B cell (primary cell): ENCODE measurements at regions of chr12 and their contacts with region 1.

Region 1: GRCh38 chr12:25151476-25151875 is 43.5 kb downstream of the DNAI7 start:
- DNase-seq: no peak
- ATAC-seq: no peak
- H3K4me3 ChIP-seq: no peak overlapping the region
- H3K4me3 Mint-ChIP-seq: no peak overlapping the region
- H3K27ac ChIP-seq: no peak overlapping the region
- H3K27ac Mint-ChIP-seq: no peak overlapping the region
- H3K4me1 ChIP-seq: peaks cover 18 to 21% of the 10 kb centered on the region in 2 donors
- H3K4me1 Mint-ChIP-seq: peaks cover 18% of the 10 kb centered on the region
- H3K27me3 ChIP-seq: no peaks in the 10 kb centered on the region
- H3K27me3 Mint-ChIP-seq: no peaks in the 10 kb centered on the region
- CTCF ChIP-seq: no peak

Region 2: GRCh38 chr12:24948757-24949722 is 202.4 kb before region 1 on chr12 and contains the start of gene BCAT1:
- CTCF ChIA-PET with region 1: no interaction called
- POLR2A ChIA-PET with region 1: no interaction called
- intact Hi-C with region 1: no loop called
- DNase-seq: peak; percentile 72
- ATAC-seq: peak; percentile 69
- H3K4me3 ChIP-seq: peak within 1 kb of the TSS; percentile 52 to 78 (median 70)
- H3K4me3 Mint-ChIP-seq: peak within 1 kb of the TSS; percentile 97
- H3K27ac ChIP-seq: peak within 1 kb of the TSS in 1 of 2 donors; percentile 45
- H3K27ac Mint-ChIP-seq: peak within 1 kb of the TSS; percentile 78
- H3K4me1 ChIP-seq: peaks cover 21 to 24% of the 10 kb centered on the region in 2 donors
- H3K4me1 Mint-ChIP-seq: peaks cover 47% of the 10 kb centered on the region
- H3K27me3 ChIP-seq: peaks cover 0 to 16% (median 10%) of the 10 kb centered on the region in 4 experiments
- H3K27me3 Mint-ChIP-seq: peaks cover 13% of the 10 kb centered on the region
- CTCF ChIP-seq: no peak
- total RNA-seq, gene BCAT1: 4.9 and 9.6 TPM in 2 replicates

Region 3: DNA sequence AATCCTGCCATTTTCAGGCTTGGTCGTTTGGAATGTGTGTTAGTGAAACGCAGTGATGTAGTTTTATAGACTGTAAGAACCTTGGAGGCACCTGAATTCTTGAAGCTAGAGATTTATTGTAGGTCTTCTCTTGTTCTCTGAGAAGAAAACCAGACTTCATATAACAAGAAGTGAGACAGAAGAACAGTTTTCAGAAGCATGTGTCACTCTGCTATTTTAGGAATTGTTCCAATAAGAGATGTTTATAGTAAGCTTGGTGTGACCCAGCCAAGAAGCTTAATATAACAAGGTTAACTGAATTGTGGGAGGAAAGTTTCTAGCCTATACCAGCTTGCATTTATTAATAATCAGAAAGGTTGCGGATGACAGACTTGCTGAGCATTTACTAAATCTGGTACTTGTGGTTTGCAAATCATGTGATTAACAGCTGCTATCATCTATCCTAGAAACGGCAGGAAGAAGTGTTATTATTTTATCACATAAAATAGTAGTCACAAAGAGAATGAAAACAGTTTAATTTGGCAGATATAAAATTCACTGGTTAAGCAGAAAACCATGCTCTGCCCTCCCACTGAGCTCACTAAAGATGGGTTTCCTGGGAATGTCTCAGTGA is 153.4 kb before region 1 on chr12:
- CTCF ChIA-PET with region 1: interaction called, 55 read pairs
- POLR2A ChIA-PET with region 1: no interaction called
- intact Hi-C with region 1: no loop called
- DNase-seq: peak; percentile 77
- ATAC-seq: peak; percentile 79
- H3K4me3 ChIP-seq: peak overlapping the region in 2 of 5 experiments; percentile 1 to 59
- H3K4me3 Mint-ChIP-seq: peak overlapping the region; percentile 64
- H3K27ac ChIP-seq: peak overlapping the region; percentile 79 to 84
- H3K27ac Mint-ChIP-seq: peak overlapping the region; percentile 85
- H3K4me1 ChIP-seq: peaks cover 74 to 76% of the 10 kb centered on the region in 2 donors
- H3K4me1 Mint-ChIP-seq: peaks cover 81% of the 10 kb centered on the region
- H3K27me3 ChIP-seq: no peaks in the 10 kb centered on the region
- H3K27me3 Mint-ChIP-seq: no peaks in the 10 kb centered on the region
- CTCF ChIP-seq: no peak

Region 4: DNA sequence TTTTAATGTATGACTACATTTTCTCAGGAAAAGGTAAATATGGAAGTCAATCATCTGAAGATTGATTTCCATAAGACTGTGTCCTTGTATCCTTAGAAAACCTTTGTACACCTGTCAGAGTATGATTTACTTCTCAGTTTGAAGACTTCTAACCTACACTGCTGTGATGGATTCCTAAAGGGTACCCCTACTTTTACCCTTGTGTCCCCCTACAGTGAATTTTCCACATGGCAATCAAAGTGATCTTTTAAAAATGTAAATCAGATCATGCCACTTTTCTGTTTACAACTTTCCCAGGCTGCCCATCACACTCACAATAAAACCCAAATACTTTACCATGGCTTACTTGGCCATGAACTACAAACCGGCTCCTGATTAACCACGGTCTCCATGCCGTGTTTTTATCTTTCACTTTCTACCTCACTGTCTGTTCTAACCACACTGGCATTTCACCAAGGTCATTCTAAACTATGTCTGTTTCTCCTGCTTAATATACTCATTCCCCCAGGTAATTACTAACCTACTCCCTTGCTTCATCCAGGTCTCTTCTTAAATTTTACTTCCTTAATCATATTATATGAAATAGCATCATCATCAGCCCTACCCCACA is 35.4 kb after region 1 on chr12:
- CTCF ChIA-PET with region 1: interaction called, 6 read pairs
- POLR2A ChIA-PET with region 1: no interaction called
- intact Hi-C with region 1: loop called (anchors 1 kb)
- DNase-seq: peak; percentile 31
- ATAC-seq: peak; percentile 61
- H3K4me3 ChIP-seq: peak overlapping the region in 2 of 5 experiments; percentile 45 to 51
- H3K4me3 Mint-ChIP-seq: peak overlapping the region; percentile 77
- H3K27ac ChIP-seq: no peak overlapping the region
- H3K27ac Mint-ChIP-seq: peak overlapping the region; percentile 32
- H3K4me1 ChIP-seq: peaks cover 0 to 3% of the 10 kb centered on the region in 2 donors
- H3K4me1 Mint-ChIP-seq: peaks cover 8% of the 10 kb centered on the region
- H3K27me3 ChIP-seq: no peaks in the 10 kb centered on the region
- H3K27me3 Mint-ChIP-seq: no peaks in the 10 kb centered on the region
- CTCF ChIP-seq: no peak

Region 5: DNA sequence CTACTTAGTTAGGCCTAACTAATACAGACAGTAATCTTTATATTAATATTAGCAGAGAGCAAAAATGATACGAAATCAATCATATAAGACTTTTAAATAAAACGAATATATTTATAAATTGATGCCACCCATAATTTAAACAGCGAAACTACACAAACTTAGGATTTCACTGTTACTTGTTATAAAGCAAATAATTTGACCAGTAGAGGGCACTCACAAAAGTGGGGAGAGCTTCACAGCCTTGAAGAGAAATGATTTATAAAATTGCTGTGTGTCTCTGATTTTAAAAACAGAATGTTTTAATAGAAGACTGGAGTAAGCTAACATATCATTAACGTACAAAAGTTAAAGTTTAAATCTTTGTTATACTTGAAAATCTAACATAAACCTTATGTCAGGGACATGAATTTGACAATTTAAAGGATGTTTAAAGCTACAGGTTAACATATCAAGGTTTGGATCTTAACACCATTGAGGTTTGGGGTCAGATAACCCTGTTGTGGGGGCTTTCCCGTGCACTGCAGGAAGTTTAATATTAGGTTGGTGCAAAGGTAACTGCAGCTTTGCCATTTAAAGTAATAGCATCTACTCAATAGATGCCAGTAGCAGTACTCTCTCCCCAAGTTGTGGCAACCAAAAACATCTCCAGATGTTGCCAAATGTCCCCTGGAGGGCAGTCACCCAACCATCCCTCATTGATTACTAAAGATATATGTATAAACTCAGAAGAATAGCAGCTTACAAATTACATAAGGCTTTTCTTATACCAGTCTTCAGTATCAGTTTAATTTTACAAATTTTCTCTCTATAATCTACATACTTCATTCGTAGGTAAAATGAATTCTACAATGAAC is 89.9 kb after region 1 on chr12:
- CTCF ChIA-PET with region 1: interaction called, 19 read pairs
- POLR2A ChIA-PET with region 1: no interaction called
- intact Hi-C with region 1: no loop called
- DNase-seq: peak; percentile 73
- ATAC-seq: peak; percentile 51
- H3K4me3 ChIP-seq: no peak overlapping the region
- H3K4me3 Mint-ChIP-seq: no peak overlapping the region
- H3K27ac ChIP-seq: peak overlapping the region in 1 of 2 donors; percentile 52
- H3K27ac Mint-ChIP-seq: peak overlapping the region; percentile 26
- H3K4me1 ChIP-seq: no peaks in the 10 kb centered on the region
- H3K4me1 Mint-ChIP-seq: peaks cover 9% of the 10 kb centered on the region
- H3K27me3 ChIP-seq: no peaks in the 10 kb centered on the region
- H3K27me3 Mint-ChIP-seq: no peaks in the 10 kb centered on the region
- CTCF ChIP-seq: peak; percentile 89

Region 6: DNA sequence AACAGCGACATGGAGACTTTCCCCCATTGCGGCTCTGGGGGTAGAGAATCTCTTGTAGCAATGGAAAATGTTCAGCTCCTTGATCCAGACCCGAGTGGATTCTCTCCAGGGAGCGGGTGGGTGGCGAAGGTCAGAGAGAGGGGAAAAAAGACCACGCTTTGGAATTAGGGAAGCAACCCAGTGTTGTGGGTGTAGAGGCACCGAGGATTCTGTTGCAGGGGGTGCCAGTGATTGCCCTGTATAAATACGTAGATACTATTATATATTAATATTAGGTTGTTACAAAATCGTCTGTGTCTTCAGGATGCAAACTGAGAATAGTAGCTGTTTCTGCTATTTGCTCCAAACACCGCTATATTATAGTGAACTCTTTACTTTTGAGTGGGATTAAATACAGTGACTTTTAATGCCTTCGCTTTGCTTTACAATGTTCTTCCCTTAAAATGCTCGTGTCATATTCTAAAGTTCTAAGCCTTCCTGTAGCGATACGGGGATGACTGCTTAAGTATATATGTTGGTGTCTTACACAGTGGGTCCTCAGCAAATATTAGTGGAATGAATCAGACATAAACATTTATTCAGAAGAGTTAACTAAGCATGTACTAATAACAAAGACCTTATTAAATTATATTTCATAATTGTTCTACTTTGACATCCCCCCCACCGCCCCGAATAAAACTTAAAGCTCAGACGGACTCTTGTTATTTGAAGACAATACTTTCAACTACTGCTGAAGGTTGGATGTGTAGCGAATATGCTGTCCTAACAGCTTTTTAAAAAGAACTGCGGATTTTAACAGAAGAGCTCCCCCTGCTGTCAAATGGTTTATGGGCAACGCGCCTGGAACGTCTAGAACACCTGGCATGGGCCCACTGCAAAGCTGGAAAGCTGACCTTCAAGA is 235.6 kb after region 1 on chr12:
- CTCF ChIA-PET with region 1: no interaction called
- POLR2A ChIA-PET with region 1: no interaction called
- intact Hi-C with region 1: loop called (anchors 1 kb)
- DNase-seq: peak; percentile 90
- ATAC-seq: peak; percentile 14
- H3K4me3 ChIP-seq: peak overlapping the region; percentile 68 to 97 (median 90)
- H3K4me3 Mint-ChIP-seq: peak overlapping the region; percentile 96
- H3K27ac ChIP-seq: peak overlapping the region; percentile 100
- H3K27ac Mint-ChIP-seq: peak overlapping the region; percentile 100
- H3K4me1 ChIP-seq: peaks cover 6 to 30% of the 10 kb centered on the region in 2 donors
- H3K4me1 Mint-ChIP-seq: peaks cover 41% of the 10 kb centered on the region
- H3K27me3 ChIP-seq: no peaks in the 10 kb centered on the region
- H3K27me3 Mint-ChIP-seq: no peaks in the 10 kb centered on the region
- CTCF ChIP-seq: peak; percentile 93

Region 7: DNA sequence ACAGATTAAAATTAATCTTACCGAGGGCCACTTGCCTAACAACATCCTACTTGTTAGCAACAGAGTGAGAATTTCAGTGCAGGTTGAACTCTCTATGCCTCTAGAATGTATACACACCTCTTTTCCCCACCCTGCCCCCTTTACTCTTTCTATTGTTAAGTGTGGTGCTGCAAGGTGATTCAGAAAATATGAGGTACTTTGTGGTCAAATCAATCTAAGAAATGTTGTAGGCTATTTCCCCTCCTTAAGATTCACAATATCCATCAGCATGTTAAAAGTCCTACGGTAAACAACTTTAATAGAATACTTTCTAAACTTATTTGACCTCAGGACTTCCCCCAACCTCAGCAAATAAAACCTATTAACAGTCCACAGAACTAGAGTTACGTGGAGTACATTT is 295.6 kb after region 1 on chr12:
- CTCF ChIA-PET with region 1: no interaction called
- POLR2A ChIA-PET with region 1: no interaction called
- intact Hi-C with region 1: no loop called
- DNase-seq: no peak
- ATAC-seq: no peak
- H3K4me3 ChIP-seq: no peak overlapping the region
- H3K4me3 Mint-ChIP-seq: no peak overlapping the region
- H3K27ac ChIP-seq: no peak overlapping the region
- H3K27ac Mint-ChIP-seq: no peak overlapping the region
- H3K4me1 ChIP-seq: no peaks in the 10 kb centered on the region
- H3K4me1 Mint-ChIP-seq: no peaks in the 10 kb centered on the region
- H3K27me3 ChIP-seq: peaks cover 0 to 3% (median 0%) of the 10 kb centered on the region in 4 experiments
- H3K27me3 Mint-ChIP-seq: peaks cover 20% of the 10 kb centered on the region
- CTCF ChIP-seq: no peak